Activated CD8-positive, alpha-beta T cell treated with anti-CD3 and anti-CD28 coated beads, Interleukin-2, amount 10 ng/mL, durations not matched to agents 7 days and 5 days (primary cell): ENCODE measurements at regions of chr17 and their contacts with region 1.

Region 1: GRCh38 chr17:72725433-72726068 is 366.9 kb downstream of the SLC39A11 start:
- DNase-seq: peak; percentile 66
- ATAC-seq: peak; percentile 42
- H3K4me3 Mint-ChIP-seq: no peak overlapping the region
- H3K27ac Mint-ChIP-seq: peak overlapping the region; percentile 80
- H3K4me1 Mint-ChIP-seq: peaks cover 61% of the 10 kb centered on the region
- H3K27me3 Mint-ChIP-seq: no peaks in the 10 kb centered on the region

Region 2: DNA sequence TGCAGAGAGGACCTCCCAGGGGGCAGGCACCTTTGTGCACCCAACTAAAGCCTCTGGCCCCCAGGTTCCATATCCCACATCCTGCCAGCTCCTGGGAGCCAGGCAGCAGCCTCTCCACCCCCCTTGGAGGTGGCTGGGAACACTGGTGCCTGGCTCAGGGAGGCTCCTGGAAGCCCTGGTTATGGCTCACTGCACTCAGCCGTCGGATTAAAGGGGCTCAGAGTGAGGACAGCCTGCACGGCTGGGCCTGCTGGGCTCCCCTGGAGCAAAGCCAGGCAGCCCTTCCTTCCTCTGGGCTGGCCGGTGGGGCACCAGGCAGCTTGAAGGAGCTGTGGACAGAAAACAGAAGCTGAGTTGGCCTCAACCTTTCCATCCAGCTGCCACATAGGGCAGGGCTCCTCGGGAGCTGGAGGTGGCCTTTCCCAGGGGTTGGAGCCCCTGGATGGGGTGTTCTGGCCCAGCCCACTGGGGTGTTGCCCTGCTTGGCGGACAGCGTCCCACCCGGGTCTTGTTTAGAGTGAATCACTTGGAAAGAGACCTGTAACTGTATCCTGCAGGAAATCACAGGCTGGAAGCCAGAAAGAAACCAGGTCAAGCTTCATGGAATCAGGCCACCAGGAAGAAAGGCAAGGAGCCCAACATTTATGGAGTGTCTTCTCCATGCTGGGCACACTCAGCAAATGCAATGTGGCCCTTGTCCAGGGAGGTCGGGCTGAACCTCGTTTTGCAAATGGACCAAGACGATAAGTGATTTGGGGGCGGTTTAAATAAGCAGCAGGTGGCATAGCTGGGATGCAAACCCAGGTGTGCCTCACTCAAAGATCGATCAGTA is 351.4 kb before region 1 on chr17:
- CTCF ChIA-PET with region 1: no interaction called
- POLR2A ChIA-PET with region 1: no interaction called
- DNase-seq: no peak
- ATAC-seq: no peak
- H3K4me3 Mint-ChIP-seq: no peak overlapping the region
- H3K27ac Mint-ChIP-seq: no peak overlapping the region
- H3K4me1 Mint-ChIP-seq: no peaks in the 10 kb centered on the region
- H3K27me3 Mint-ChIP-seq: no peaks in the 10 kb centered on the region

Region 3: DNA sequence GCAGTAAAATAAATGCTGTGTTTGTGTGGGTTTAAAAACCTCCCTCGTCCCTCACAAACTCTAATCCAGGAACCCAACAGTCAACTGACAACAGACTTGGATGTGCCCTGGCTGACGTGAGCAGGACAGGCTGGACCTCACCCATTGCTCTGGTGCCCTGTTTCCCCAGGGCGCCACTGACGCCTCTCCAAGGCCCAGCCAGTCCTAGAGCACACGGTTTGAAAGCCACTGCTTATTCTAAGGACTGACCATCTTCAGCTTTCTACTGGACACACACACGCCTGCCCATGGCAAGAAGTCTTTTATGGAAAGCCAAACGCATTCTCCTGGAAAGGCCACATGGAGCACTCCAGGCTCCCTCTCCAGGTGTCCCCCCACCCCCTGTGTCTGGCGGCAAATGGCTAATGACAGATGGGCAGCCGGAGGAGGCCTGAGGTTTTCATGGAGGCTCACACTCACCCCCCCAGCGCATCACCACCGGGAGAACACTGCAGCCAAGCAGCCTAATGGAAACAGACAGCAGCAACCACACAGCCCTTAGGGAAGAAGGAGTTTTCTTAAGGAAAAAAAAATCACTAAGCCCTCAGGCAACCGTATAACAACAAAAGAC is 285.6 kb before region 1 on chr17:
- CTCF ChIA-PET with region 1: no interaction called
- POLR2A ChIA-PET with region 1: no interaction called
- DNase-seq: no peak
- ATAC-seq: no peak
- H3K4me3 Mint-ChIP-seq: no peak overlapping the region
- H3K27ac Mint-ChIP-seq: no peak overlapping the region
- H3K4me1 Mint-ChIP-seq: no peaks in the 10 kb centered on the region
- H3K27me3 Mint-ChIP-seq: no peaks in the 10 kb centered on the region

Region 4: GRCh38 chr17:72556944-72557826 is 168.4 kb before region 1 on chr17:
- CTCF ChIA-PET with region 1: interaction called, 259 read pairs
- POLR2A ChIA-PET with region 1: no interaction called
- DNase-seq: peak; percentile 78
- ATAC-seq: peak; percentile 85
- H3K4me3 Mint-ChIP-seq: no peak overlapping the region
- H3K27ac Mint-ChIP-seq: no peak overlapping the region
- H3K4me1 Mint-ChIP-seq: no peaks in the 10 kb centered on the region
- H3K27me3 Mint-ChIP-seq: no peaks in the 10 kb centered on the region

Region 5: DNA sequence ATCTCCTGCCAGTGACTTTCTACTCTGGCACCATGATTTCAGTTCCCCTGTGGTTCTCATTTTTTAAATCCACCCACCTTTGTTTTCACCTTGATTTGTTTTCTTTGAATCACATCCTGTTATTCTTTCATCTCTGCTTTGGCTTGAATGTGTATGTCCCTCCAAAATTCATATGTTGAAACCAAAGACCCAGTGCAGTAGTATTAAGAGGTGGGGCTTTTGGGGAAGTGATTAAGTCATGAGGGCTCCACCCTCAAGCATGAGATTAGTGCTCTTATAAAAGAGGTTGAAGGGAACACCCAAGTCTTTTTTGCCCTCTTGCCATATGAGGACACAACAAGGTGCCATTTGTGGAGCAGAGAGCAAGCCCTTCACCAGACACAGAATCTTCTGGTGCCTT is 15.4 kb before region 1 on chr17:
- CTCF ChIA-PET with region 1: interaction called, 107 read pairs
- POLR2A ChIA-PET with region 1: interaction called, 5 read pairs
- DNase-seq: no peak
- ATAC-seq: no peak
- H3K4me3 Mint-ChIP-seq: no peak overlapping the region
- H3K27ac Mint-ChIP-seq: peak overlapping the region; percentile 80
- H3K4me1 Mint-ChIP-seq: peaks cover 48% of the 10 kb centered on the region
- H3K27me3 Mint-ChIP-seq: no peaks in the 10 kb centered on the region

Region 6: GRCh38 chr17:72890711-72891110 is 165.2 kb after region 1 on chr17:
- CTCF ChIA-PET with region 1: no interaction called
- POLR2A ChIA-PET with region 1: no interaction called
- DNase-seq: no peak
- ATAC-seq: no peak
- H3K4me3 Mint-ChIP-seq: no peak overlapping the region
- H3K27ac Mint-ChIP-seq: no peak overlapping the region
- H3K4me1 Mint-ChIP-seq: no peaks in the 10 kb centered on the region
- H3K27me3 Mint-ChIP-seq: no peaks in the 10 kb centered on the region

Region 7: DNA sequence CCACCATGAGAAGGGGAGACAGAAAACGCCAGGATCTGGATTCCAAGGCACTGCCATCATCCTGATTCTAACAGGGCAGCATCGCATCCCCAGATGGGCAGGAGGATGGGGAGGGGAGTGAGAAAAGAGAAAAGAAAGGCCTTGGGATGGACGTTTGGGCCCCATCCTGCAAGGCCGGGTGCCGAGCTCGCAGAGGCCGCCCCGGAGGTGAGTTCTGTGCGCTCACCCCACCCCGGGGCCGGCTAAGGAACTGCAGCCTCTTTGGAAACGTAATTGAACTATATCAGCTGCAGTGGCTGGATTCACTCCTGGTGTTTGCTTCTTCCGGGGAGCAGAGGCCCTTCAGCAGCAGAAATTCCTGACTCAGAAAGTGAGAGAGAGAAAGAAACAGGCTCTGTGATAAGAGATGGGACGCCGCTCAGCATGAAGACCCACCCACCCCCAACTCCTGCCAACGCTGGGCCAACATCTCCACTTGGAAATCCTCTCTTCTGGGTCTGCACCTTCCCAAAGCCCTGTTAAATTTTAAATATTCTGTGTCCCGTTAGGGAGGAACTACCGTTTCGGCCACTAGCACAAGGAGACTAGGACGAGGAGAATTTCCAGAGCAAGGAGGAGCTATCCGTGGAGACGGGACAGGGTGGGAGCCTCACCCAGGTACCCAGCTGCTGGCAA is 430.8 kb after region 1 on chr17:
- CTCF ChIA-PET with region 1: interaction called, 91 read pairs
- POLR2A ChIA-PET with region 1: no interaction called
- DNase-seq: peak; percentile 70
- ATAC-seq: peak; percentile 95
- H3K4me3 Mint-ChIP-seq: no peak overlapping the region
- H3K27ac Mint-ChIP-seq: no peak overlapping the region
- H3K4me1 Mint-ChIP-seq: no peaks in the 10 kb centered on the region
- H3K27me3 Mint-ChIP-seq: peaks cover 20% of the 10 kb centered on the region

Region 8: DNA sequence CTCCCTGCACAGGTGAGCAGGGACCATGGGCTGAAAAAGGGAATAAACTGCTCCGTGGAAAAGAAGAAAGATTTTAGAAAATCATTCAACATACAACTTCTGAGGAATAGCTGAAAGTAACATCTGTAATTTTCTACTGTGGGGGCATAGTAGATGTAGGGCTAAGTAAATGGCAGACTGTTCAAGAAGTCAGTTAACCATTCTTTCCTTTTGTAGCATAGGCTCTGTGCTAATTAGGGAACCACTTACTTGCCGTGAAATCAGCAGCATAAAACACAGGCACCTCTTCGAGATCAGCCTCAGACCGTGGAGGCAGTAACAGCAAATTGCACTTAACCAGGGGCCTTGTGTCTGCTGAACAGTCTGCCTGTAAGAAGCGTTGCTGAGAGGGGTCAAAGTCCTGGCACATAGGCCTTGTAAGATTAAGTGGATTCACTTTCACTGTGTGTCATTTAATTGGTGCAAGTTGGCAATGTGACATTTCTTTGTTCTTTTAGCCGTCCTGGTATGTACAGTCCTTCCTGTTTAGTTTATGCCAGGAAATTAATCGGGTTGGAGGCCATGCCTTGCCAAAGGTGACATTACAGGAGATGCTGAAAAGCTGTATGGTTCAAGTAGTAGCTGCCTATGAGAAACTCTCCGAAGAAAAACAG is 477.7 kb after region 1 on chr17:
- CTCF ChIA-PET with region 1: interaction called, 27 read pairs
- POLR2A ChIA-PET with region 1: interaction called, 3 read pairs
- DNase-seq: peak; percentile 26
- ATAC-seq: peak; percentile 34
- H3K4me3 Mint-ChIP-seq: no peak overlapping the region
- H3K27ac Mint-ChIP-seq: peak overlapping the region; percentile 66
- H3K4me1 Mint-ChIP-seq: peaks cover 30% of the 10 kb centered on the region
- H3K27me3 Mint-ChIP-seq: no peaks in the 10 kb centered on the region

Region 9: GRCh38 chr17:73255671-73256181 is 530.2 kb after region 1 on chr17:
- CTCF ChIA-PET with region 1: interaction called, 10 read pairs
- POLR2A ChIA-PET with region 1: no interaction called
- DNase-seq: peak; percentile 68
- ATAC-seq: peak; percentile 79
- H3K4me3 Mint-ChIP-seq: no peak overlapping the region
- H3K27ac Mint-ChIP-seq: no peak overlapping the region
- H3K4me1 Mint-ChIP-seq: no peaks in the 10 kb centered on the region
- H3K27me3 Mint-ChIP-seq: no peaks in the 10 kb centered on the region